GM12878 (cell line): ENCODE measurements at regions of chr7 and their contacts with region 1.

Region 1: DNA sequence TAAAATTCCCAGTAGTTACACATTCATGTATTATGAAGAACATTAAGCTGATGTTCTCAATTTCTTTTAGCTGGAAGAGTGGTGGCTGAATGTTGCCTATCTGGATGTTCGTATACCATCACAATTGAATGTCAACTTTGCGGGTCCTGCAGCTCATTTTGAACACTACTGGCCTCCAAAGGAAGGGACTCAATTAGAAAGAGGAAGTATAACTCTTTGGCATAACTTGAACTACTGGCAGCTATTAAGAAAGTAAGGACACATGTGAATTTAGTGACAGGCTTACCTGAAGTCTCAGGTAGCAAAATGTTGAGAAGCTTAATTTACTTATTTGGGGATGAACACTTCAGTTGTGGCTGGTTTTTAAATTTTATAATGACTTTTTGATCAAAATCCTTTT is 15.9 kb downstream of the CROT start:
- DNase-seq: no peak
- ATAC-seq: no peak
- H3K4me3 ChIP-seq: no peak overlapping the region
- H3K27ac ChIP-seq: no peak overlapping the region
- H3K4me1 ChIP-seq: no peaks in the 10 kb centered on the region
- H3K27me3 ChIP-seq: no peaks in the 10 kb centered on the region
- CTCF ChIP-seq: no peak
- EP300 ChIP-seq: no peak
- POLR2A ChIP-seq: no peak
- RAD21 ChIP-seq: no peak

Region 2: DNA sequence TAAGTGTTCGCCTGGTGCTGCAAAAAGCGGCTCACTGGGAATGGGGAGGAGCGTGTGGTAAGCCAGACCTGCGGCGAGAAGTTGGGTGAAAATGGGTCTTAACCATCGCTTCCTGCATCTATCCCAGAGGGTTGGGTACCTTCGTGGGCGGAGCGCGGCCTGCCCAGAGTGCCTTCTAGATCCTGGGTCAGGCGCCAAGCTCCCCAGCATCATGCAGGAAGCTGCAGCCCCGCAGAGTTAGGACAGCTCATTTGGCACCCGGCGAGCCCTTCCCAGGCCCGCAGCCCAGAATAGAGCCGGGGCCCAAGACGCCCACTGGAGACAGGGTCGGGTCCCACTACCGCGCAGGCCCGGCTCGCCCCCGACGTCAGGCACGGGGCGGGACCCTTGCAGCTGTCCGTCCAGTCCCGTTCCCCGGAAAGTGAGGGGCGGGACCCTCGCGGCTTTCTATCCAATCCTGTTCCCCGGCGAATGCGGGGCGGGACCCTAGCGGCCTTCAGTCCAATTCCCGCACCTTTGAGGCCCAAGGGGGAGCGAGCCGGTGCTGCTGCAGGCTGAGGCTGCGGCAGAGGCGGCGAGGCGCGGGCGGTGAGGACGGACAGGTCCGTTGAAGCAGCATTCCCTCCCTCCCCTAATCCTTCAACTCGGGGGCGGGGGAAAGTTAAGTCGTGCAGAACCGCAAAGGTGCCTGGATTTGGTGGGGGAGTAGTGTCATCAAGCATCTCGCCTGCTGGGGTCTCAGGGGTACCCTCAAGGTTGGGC is 16.0 kb before region 1 on chr7 and contains the start of gene CROT:
- CTCF ChIA-PET with region 1: interaction called, 7 read pairs
- POLR2A ChIA-PET with region 1: interaction called, 10 read pairs
- RAD21 ChIA-PET with region 1: interaction called, 4 read pairs
- SMC1A ChIA-PET with region 1: interaction called, 4 read pairs
- in situ Hi-C with region 1: no loop called
- intact Hi-C with region 1: no loop called
- DNase-seq: peak; percentile 67
- ATAC-seq: peak; percentile 97
- H3K4me3 ChIP-seq: peak within 1 kb of the TSS; percentile 80
- H3K27ac ChIP-seq: peak within 1 kb of the TSS; percentile 76
- H3K4me1 ChIP-seq: no peaks in the 10 kb centered on the region
- H3K27me3 ChIP-seq: no peaks in the 10 kb centered on the region
- CTCF ChIP-seq: no peak
- EP300 ChIP-seq: no peak
- POLR2A ChIP-seq: peak; percentile 91
- RAD21 ChIP-seq: no peak
- polyA plus RNA-seq, gene CROT: 5.5 to 6.0 TPM